Posterior vena cava (tissue), 2 donors: ENCODE measurements at regions of chrX and their contacts with region 1.

Region 1: GRCh38 chrX:64182208-64182607 is 23.3 kb downstream of the AMER1 start:
- DNase-seq: no peak

Region 2: DNA sequence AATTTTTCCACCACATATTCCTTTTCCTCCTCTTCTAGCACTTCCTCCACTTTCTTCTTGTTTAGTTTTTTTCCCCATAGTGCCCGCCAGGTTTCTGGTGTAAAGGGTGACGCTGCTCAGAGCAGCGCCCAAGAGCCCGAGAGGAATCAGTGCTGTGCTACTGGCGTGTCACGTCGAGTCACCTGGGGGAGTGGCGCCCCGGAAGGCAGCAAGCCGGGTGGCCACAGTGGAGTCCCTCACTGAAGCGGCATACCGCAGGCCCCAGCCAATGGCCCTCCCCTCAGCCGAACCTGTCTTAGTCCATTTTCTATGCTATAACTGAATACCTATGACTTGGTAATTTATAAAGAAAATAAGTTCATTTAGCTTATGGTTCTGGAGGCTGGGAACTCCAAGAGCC is 882.6 kb before region 1 on chrX:
- intact Hi-C with region 1: loop called in 1 of 2 experiments (anchors 5 kb)
- DNase-seq: no peak

Region 3: DNA sequence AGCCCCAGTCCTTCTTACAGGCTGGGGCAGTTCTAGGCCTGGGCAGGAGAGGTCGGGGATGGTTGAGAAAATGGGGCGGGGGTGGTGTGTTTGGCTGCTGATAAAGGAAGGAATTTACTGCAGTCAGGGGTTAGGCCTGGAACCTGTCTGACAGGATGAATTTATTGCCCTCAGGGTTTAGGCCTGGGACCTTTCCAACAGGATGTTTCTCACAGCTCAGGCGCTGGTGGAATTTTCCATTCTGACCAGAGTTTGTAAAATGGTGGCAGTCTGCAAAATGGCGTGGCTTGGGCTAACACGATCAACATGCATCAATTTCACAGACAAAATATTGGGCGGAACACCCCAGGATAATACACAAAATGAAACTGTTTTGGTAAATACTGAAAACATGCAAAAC is 747.5 kb before region 1 on chrX:
- intact Hi-C with region 1: no loop called
- DNase-seq: no peak

Region 4: GRCh38 chrX:64536736-64537135 is 354.5 kb after region 1 on chrX:
- intact Hi-C with region 1: no loop called
- DNase-seq: no peak